ENCODE measurements at regions of chr10 and their contacts with region 1.

Region 1: GRCh38 chr10:70363971-70364771 is 18.3 kb downstream of the LRRC20 start:
- ATAC-seq: peak; percentile 95 to 99 (median 96)
- H3K4me3 ChIP-seq: no peak overlapping the region
- H3K27ac ChIP-seq: peak overlapping the region in 1 of 2 donors; percentile 56
- H3K4me1 ChIP-seq: peaks cover 4 to 7% of the 10 kb centered on the region in 2 donors

Region 2: GRCh38 chr10:70212879-70213278 is 151.3 kb before region 1 on chr10:
- in situ Hi-C with region 1: loop called in 4 of 9 experiments (anchors 10 to 25 kb)
- ATAC-seq: peak in 7 of 8 experiments; percentile 18 to 98 (median 59)
- H3K4me3 ChIP-seq: no peak overlapping the region
- H3K27ac ChIP-seq: peak overlapping the region in 1 of 2 donors; percentile 53
- H3K4me1 ChIP-seq: peaks cover 0 to 8% of the 10 kb centered on the region in 2 donors

Region 3: GRCh38 chr10:70221030-70221429 is 143.1 kb before region 1 on chr10:
- in situ Hi-C with region 1: loop called in 7 of 9 experiments (anchors 10 to 25 kb)
- ATAC-seq: no peak
- H3K4me3 ChIP-seq: no peak overlapping the region
- H3K27ac ChIP-seq: no peak overlapping the region
- H3K4me1 ChIP-seq: no peaks in the 10 kb centered on the region

Region 4: DNA sequence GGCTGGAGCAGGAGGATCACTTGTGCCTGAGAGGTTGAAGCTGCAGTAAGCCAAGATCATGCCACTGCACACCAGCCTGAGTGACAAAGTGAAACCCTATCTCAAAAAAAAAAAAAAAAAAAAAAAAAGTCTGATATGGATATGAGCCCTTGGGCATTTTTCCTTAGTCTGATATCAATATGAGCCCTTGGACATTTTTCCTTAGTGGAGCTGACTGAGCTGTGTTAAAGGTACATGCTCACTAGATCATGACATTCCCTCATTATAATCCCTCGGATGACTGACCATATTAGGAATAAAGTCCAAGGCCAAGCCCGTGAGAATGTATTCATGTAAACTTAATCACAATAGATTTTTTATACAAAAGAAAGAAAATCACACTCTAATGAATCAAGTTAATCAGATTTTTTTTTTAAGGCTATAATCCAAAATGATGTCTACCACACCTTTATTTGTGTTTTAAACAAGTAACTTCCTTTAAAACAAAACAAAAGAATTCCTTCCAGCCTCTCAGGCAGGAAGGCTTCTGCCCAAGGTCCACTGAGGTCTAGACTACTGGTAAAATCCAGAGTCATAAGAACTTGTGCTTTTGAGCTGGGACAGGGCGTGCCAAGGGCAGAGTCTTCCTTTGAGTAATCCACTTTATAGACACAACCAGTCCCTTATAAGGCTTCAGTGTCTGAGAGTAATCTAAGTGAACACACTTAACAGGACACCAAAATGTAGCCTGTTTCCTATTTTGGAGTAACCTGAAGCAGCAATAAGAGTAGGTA is 136.4 kb before region 1 on chr10:
- in situ Hi-C with region 1: loop called in 5 of 9 experiments (anchors 10 to 25 kb)
- ATAC-seq: peak in 2 of 8 experiments; percentile 12 to 26
- H3K4me3 ChIP-seq: no peak overlapping the region
- H3K27ac ChIP-seq: no peak overlapping the region
- H3K4me1 ChIP-seq: peaks cover 5 to 12% of the 10 kb centered on the region in 2 donors

Region 5: DNA sequence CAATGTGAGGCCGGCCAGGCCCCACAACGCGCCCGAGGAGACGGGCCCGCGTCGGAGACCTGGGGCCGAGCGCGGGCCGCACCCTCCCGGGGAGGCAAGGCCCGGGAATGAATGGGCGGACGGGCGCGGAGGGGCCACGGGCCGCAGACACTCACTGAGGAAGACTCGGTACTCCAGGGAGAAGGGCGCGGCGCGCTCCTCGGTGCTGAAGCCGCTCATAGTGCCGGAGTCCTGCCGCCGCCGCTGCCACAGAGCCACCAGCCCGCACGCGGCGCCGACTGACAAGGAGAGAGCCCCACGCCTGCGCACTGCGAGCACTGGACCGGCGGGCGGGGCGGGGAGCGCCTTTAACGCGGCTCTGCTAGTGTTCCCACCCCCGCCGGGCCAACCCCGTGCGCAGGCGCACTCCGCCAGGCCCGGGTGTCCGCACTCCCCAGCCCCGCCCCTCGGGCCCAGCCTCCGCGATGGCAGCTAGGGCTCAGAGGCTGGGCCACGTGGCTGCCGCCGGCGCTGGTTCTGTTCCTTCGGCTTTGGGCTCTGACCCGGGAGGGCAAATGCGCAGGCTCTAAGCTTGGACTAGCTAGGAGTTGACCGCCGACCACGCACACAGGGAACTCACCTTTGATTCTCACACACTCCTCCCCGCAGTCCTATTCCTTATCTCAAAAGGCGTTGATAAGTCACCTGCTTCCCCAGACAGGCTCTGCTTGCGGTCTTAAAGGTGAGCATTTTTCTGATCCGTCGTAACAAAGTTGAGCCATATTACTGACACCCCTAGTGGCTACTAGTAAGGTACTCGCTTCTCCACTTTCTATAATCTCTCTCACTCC is 130.8 kb before region 1 on chr10 and contains the start of gene PPA1:
- in situ Hi-C with region 1: loop called in 3 of 9 experiments (anchors 10 to 25 kb)
- ATAC-seq: peak; percentile 88 to 95 (median 91)
- H3K4me3 ChIP-seq: peak within 1 kb of the TSS; percentile 64 to 85 (median 78)
- H3K27ac ChIP-seq: peak within 1 kb of the TSS; percentile 74 to 83
- H3K4me1 ChIP-seq: peaks cover 12 to 26% of the 10 kb centered on the region in 2 donors
- total RNA-seq, gene PPA1: 113 to 213 (median 168) TPM

Region 6: DNA sequence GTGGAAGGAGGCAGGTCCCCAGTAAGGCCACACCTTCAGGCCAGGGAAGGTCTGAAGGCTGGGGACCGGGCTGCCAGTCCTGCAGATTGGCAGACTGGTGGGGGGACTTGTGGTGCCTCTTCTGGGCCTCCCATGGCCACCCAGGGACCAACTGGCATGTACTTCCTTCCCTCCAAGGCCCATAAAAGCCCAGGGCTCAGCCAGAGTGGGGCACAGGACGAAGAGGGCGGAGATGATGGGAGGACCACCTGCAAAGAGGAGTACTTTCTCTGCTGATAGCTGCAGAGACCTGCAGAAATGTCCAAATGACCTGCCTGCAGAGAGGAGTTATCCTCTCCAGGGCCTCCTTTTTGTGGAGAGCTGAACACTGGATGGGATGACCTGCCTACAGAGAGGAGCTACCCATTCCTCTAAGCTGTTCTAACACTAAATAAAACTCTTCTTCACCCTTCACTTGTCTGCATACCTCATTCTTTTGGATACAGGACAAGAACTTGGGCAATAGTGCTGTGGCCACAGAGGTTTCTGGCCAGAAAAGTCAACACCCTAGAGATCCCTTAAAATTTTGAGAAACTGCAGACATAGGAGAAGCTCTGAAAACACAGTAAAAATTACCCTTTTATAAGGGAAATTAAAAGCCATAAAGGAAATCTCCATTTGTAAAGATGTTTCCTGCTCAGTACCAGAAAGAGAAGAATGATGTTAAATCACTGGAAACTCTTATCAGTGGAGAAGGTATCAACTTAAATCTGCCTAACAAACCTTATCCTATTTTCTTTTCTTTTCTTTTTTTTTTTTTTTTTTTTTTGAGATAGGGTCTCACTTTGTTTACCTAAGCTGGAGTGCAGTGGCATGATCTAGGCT is 259.0 kb after region 1 on chr10:
- in situ Hi-C with region 1: no loop called
- ATAC-seq: no peak
- H3K4me3 ChIP-seq: no peak overlapping the region
- H3K27ac ChIP-seq: no peak overlapping the region
- H3K4me1 ChIP-seq: no peaks in the 10 kb centered on the region

Measured in motor neuron (in vitro differentiated cells).